Activated CD4-positive, alpha-beta memory T cell treated with anti-CD3 and anti-CD28 coated beads for 36 hours (primary cell): ENCODE measurements at regions of chr3 and their contacts with region 1.

Region 1: DNA sequence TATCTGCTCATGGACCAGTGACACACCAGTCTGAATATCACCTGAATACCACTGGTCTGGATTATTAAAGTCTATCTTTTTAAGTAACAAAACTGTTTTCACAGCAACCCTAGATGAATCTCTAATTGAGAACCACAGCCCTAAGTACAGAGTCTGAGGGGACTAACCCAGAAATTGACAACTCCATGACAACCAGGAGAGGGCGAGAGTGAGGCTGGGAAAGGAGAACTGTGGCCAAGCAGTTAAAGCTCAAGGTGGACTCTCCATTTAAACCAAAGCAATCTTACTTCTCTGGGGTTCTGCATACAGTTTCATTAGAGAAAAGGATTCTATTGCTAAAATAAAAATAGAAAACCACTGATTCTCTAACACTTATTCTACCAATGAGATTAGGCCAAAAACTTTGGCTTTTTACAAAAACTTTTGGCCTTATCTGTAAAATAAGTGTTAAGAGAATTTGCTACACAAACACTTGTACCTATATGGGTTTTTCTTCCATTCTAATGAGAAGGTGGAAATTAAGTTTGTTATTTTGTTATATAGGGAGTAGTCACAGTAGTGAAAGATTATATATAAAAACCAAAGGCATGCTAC is 11.4 kb downstream of the NEK10 start:
- DNase-seq: peak; percentile 77
- H3K4me3 Mint-ChIP-seq: no peak overlapping the region
- H3K27ac Mint-ChIP-seq: no peak overlapping the region
- H3K4me1 Mint-ChIP-seq: peaks cover 26% of the 10 kb centered on the region
- H3K27me3 Mint-ChIP-seq: no peaks in the 10 kb centered on the region

Region 2: GRCh38 chr3:27228805-27229204 is 129.0 kb before region 1 on chr3:
- CTCF ChIA-PET with region 1: no interaction called
- POLR2A ChIA-PET with region 1: no interaction called
- intact Hi-C with region 1: no loop called
- DNase-seq: no peak
- H3K4me3 Mint-ChIP-seq: no peak overlapping the region
- H3K27ac Mint-ChIP-seq: no peak overlapping the region
- H3K4me1 Mint-ChIP-seq: peaks cover 1% of the 10 kb centered on the region
- H3K27me3 Mint-ChIP-seq: peaks cover 2% of the 10 kb centered on the region

Region 3: DNA sequence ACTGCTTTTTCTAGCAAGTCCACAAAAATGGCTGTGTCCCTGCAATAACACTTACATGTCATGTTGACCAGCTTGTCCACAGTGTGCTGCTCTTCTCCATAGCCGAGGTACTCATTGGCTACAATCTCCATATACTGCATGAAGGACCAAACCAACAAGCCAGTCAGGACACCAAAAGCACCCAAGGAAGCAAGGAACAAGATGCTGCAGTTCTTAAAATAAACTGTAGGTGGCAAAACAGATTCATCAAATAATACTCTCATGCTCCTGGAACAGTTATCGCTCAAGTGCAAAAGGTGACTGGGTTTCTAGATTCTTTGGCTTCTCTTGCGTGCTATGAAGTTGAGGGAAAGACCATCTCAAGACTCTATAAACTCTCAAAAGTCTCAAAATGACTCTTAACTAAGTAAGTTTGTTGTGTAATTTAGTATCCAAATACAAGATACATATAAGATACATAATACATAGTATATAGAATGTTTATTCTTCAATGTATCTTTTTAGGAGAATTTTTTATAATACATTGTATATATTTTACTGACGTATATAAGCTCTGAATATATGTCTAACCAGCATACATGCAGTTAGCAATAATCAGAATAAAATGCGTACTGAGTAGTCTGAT is 45.6 kb before region 1 on chr3:
- CTCF ChIA-PET with region 1: interaction called, 3 read pairs
- POLR2A ChIA-PET with region 1: no interaction called
- intact Hi-C with region 1: loop called (anchors 5 kb)
- DNase-seq: no peak
- H3K4me3 Mint-ChIP-seq: no peak overlapping the region
- H3K27ac Mint-ChIP-seq: no peak overlapping the region
- H3K4me1 Mint-ChIP-seq: no peaks in the 10 kb centered on the region
- H3K27me3 Mint-ChIP-seq: no peaks in the 10 kb centered on the region

Region 4: DNA sequence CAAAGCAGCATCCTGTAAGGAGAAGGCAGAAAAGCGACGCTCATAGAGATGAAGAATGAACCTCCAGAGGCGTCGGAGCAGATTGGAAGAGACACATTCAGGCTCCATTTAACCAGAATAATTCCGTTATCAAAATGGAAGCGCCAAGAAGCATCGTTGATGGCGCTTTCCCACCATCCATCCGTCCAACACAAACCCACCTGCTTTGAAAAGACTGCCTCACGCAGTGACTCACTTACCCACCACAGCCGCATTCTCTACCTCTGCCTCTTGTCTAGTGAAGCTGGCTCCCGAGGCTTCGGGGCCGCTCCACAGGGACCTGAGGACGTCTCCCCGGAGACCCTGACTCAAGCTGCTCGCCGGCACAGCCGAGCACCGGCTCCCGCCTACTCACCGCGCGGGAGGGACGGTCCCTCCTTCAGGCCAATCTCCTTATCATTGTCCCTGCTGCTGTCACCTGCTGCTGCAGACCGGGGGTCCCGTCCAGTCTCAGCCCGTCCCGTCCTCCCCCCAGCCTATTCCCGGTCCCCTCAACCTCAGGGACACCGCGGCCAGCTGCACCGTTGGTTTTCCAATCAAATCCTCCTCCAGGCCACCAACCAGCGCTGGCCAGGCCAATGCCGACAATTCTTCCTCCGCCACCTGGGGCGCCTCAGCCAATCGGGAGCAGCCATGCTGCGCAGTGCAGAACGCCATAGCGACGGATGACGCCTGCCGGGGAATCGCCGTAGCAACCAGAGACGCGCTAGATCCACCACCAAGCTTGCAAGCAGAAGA is 11.3 kb after region 1 on chr3 and contains the start of gene NEK10:
- CTCF ChIA-PET with region 1: interaction called, 10 read pairs
- POLR2A ChIA-PET with region 1: no interaction called
- intact Hi-C with region 1: loop called (anchors 1 kb)
- DNase-seq: peak; percentile 94
- H3K4me3 Mint-ChIP-seq: peak within 1 kb of the TSS; percentile 88
- H3K27ac Mint-ChIP-seq: peak within 1 kb of the TSS; percentile 66
- H3K4me1 Mint-ChIP-seq: peaks cover 9% of the 10 kb centered on the region
- H3K27me3 Mint-ChIP-seq: no peaks in the 10 kb centered on the region
- total RNA-seq, gene NEK10: 0.36 to 0.48 TPM

Region 5: GRCh38 chr3:27467545-27467944 is 109.8 kb after region 1 on chr3:
- CTCF ChIA-PET with region 1: interaction called, 16 read pairs
- POLR2A ChIA-PET with region 1: no interaction called
- intact Hi-C with region 1: loop called (anchors 1 kb)
- DNase-seq: no peak
- H3K4me3 Mint-ChIP-seq: no peak overlapping the region
- H3K27ac Mint-ChIP-seq: peak overlapping the region; percentile 28
- H3K4me1 Mint-ChIP-seq: peaks cover 14% of the 10 kb centered on the region
- H3K27me3 Mint-ChIP-seq: no peaks in the 10 kb centered on the region

Region 6: GRCh38 chr3:27590437-27591298 is 232.9 kb after region 1 on chr3:
- CTCF ChIA-PET with region 1: interaction called, 4 read pairs
- POLR2A ChIA-PET with region 1: no interaction called
- intact Hi-C with region 1: loop called (anchors 5 kb)
- DNase-seq: peak; percentile 13
- H3K4me3 Mint-ChIP-seq: no peak overlapping the region
- H3K27ac Mint-ChIP-seq: peak overlapping the region; percentile 62
- H3K4me1 Mint-ChIP-seq: peaks cover 25% of the 10 kb centered on the region
- H3K27me3 Mint-ChIP-seq: no peaks in the 10 kb centered on the region

Region 7: DNA sequence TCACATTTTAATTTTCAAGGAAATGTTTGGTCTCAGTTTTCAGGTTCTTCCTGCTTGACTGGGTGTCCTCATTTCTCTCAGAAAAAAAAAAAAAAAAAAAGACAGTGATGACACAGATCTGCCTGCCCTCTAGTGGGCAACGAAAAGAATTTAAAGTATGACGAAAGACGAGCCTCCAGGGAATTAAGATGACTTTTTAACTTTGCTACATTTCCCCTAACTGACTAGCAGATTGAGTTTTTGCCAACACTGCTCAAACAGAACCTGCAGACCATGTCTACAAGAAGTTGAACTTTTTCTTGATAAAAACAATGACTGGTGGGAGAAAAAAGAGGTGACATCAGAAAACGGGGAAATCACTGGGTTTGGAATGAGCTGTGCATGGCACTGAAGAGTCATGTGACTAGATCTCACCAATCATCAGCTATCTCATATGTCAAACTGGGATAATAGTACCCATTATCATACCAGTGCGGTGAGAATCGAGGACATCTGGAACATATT is 323.5 kb after region 1 on chr3:
- CTCF ChIA-PET with region 1: interaction called, 18 read pairs
- POLR2A ChIA-PET with region 1: no interaction called
- intact Hi-C with region 1: loop called (anchors 1 kb)
- DNase-seq: no peak
- H3K4me3 Mint-ChIP-seq: peak overlapping the region; percentile 68
- H3K27ac Mint-ChIP-seq: peak overlapping the region; percentile 72
- H3K4me1 Mint-ChIP-seq: peaks cover 19% of the 10 kb centered on the region
- H3K27me3 Mint-ChIP-seq: no peaks in the 10 kb centered on the region

Region 8: DNA sequence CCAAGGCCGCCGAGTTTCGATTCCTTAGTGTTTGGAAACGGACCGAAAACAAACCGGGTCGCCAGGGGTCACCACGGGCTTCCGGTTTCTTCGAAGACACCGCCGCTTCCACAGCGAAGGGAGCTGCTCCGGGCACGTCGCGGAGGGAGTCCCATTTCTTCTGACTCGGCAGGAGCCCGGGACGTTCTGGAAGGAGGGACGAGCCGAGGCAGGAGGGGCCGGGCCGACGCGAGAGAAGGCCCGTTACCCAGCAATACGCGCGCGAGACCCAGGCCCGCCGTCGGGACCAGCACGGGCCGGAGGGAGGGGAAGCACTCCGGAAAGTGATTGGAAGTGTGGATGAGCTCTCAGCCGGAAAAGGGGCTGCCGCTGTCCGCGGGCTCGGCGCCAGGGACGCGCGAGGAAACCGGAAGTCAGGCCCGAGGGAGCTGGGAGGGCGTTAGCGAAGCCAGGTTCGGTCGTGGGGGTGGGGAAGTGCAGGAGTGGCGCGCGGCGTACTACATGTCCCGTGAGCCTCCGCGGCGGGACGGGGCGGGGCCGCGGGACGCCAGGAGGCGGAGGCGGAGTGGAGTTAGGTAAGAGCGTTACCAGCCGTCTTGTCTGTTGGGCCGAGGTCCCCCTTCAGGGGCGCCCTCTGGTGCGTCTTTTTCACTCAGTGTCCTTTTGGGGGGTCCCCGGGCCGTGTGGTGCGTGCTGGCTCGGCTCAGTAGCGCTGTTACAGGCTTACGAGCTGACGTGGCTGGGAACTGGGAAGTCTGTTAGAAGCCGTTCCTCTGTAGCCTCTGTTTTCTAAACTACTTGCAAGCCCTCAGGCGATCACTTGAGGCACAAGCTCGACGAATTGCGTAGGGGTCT is 991.1 kb after region 1 on chr3 and contains the starts of genes AZI2 and ZCWPW2:
- CTCF ChIA-PET with region 1: no interaction called
- POLR2A ChIA-PET with region 1: no interaction called
- intact Hi-C with region 1: loop called (anchors 10 kb)
- DNase-seq: peak; percentile 94
- H3K4me3 Mint-ChIP-seq: peak within 1 kb of the TSS; percentile 95
- H3K27ac Mint-ChIP-seq: peak within 1 kb of the TSS; percentile 88
- H3K4me1 Mint-ChIP-seq: peaks cover 40% of the 10 kb centered on the region
- H3K27me3 Mint-ChIP-seq: no peaks in the 10 kb centered on the region
- total RNA-seq, gene AZI2: 35.5 to 38.9 TPM
- total RNA-seq, gene ZCWPW2: 0.39 to 0.43 TPM